Activated CD4-positive, alpha-beta memory T cell treated with anti-CD3 and anti-CD28 coated beads for 36 hours (primary cell): ENCODE measurements at regions of chr12 and their contacts with region 1.

Region 1: DNA sequence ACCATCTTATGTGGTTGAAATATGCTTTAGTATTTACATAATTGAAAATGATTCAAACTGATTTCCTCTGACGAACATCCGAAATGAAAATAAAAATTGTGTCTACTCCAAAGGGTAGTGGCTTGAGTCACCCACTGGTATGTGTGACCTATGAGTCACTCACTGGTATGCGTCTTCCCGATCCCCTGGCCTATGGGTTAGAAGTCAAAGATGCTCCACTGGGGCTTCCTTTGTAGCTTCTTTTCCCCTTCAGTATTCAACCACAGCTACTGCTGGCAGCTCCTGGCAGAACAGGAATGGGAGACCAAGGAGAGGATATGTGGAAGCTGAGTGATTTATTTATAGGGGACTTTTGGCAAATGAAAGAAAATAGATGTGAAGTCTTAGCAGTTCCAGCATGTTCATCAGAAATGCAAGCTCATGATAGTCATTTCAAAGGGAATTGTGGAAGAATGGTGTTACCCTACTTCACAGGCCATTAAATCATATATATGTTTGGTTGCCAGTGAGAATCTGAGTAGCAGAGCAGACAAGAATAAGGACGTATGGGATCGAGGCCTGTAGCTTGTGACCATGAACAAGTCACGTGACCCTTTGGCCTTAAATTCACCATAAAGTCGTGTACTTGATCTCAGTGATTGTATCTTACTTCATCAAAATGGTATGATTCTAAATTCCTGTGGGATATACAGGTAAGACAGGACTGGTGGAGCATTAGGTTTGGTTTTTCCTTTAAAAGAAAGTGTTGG is 108.3 kb downstream of the CRADD start:
- DNase-seq: peak; percentile 73
- H3K4me3 Mint-ChIP-seq: peak overlapping the region; percentile 16
- H3K27ac Mint-ChIP-seq: peak overlapping the region; percentile 81
- H3K4me1 Mint-ChIP-seq: peaks cover 57% of the 10 kb centered on the region
- H3K27me3 Mint-ChIP-seq: no peaks in the 10 kb centered on the region

Region 2: GRCh38 chr12:93403988-93404803 is 381.2 kb before region 1 on chr12:
- CTCF ChIA-PET with region 1: no interaction called
- POLR2A ChIA-PET with region 1: no interaction called
- intact Hi-C with region 1: loop called (anchors 10 kb)
- DNase-seq: no peak
- H3K4me3 Mint-ChIP-seq: no peak overlapping the region
- H3K27ac Mint-ChIP-seq: peak overlapping the region; percentile 36
- H3K4me1 Mint-ChIP-seq: peaks cover 44% of the 10 kb centered on the region
- H3K27me3 Mint-ChIP-seq: no peaks in the 10 kb centered on the region

Region 3: GRCh38 chr12:93677195-93678064 is 108.0 kb before region 1 on chr12 and contains the start of gene CRADD:
- CTCF ChIA-PET with region 1: no interaction called
- POLR2A ChIA-PET with region 1: no interaction called
- intact Hi-C with region 1: loop called (anchors 1 kb)
- DNase-seq: peak; percentile 90
- H3K4me3 Mint-ChIP-seq: peak within 1 kb of the TSS; percentile 93
- H3K27ac Mint-ChIP-seq: peak within 1 kb of the TSS; percentile 100
- H3K4me1 Mint-ChIP-seq: peaks cover 41% of the 10 kb centered on the region
- H3K27me3 Mint-ChIP-seq: peaks cover 11% of the 10 kb centered on the region
- total RNA-seq, gene CRADD: 8.9 to 10.4 TPM

Region 4: DNA sequence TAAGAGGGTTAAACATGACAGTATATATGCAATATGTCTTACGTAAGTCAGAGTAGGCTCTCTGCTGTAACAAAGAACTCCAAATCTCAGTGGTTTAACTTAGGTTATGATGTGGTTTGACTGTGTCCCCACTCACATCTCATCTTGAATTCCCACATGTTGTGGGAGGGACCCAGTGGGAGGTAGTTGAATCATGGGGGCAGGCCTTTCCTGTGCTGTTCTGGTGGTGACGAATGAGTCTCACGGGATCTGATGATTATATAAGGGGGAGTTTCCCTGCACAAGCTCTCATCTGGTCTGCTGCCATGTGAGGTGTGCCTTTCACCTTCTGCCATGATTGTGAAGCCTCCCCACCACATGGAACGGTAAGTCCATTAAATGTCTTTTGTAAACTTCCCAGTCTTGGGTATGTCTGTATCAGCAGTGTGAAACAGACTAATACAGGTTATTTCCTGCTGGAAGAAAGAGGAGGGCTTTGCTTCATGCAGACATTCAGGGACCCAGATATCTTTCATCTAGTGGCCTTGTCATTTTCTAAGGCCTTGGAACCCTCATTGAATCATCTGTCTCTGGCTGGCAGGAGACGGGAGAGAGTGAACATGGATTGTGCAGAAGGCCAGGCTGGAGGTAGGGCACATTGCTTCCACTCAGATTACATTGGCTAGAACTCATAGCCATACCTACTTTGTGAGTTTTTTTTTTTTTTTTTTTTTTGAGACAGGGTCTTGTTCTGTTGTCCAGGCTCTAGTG is 12.1 kb before region 1 on chr12:
- CTCF ChIA-PET with region 1: no interaction called
- POLR2A ChIA-PET with region 1: interaction called, 3 read pairs
- intact Hi-C with region 1: loop called (anchors 1 kb)
- DNase-seq: peak; percentile 77
- H3K4me3 Mint-ChIP-seq: peak overlapping the region; percentile 45
- H3K27ac Mint-ChIP-seq: peak overlapping the region; percentile 35
- H3K4me1 Mint-ChIP-seq: peaks cover 39% of the 10 kb centered on the region
- H3K27me3 Mint-ChIP-seq: no peaks in the 10 kb centered on the region

Region 5: GRCh38 chr12:93847517-93848474 is 62.4 kb after region 1 on chr12:
- CTCF ChIA-PET with region 1: no interaction called
- POLR2A ChIA-PET with region 1: no interaction called
- intact Hi-C with region 1: loop called (anchors 1 kb)
- DNase-seq: no peak
- H3K4me3 Mint-ChIP-seq: no peak overlapping the region
- H3K27ac Mint-ChIP-seq: no peak overlapping the region
- H3K4me1 Mint-ChIP-seq: peaks cover 31% of the 10 kb centered on the region
- H3K27me3 Mint-ChIP-seq: no peaks in the 10 kb centered on the region